Heart left ventricle (tissue), 16 donors: ENCODE measurements at regions of chr11 and their contacts with region 1.

Region 1: DNA sequence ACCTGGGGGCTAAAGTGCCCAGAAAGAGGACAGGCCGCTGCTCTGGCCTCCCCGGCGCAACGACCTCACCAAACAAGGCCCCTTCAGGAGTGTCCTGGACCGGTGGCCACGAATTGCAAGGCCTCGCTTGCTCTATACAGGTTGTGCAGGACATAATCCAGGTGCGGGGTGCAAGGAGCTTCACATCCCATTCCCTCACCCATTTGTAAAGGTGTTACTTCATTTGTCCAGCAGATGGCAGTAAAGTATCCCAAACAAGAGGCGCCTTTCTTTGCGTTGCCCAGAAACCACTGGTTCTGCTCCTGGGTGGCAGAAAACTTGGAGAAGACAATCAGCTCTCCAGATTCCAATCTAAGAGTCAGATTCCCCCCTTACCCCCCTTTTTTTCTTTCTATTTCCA is 35.9 kb upstream of the PRDM11 start:
- DNase-seq: peak in 3 of 5 donors; percentile 24 to 48 (median 45)
- ATAC-seq: peak; percentile 37 to 77 (median 68)
- H3K4me3 ChIP-seq: no peak overlapping the region
- H3K27ac ChIP-seq: no peak overlapping the region
- H3K4me1 ChIP-seq: peaks cover 0 to 3% (median 0%) of the 10 kb centered on the region in 12 donors
- H3K27me3 ChIP-seq: peaks cover 0 to 13% (median 0%) of the 10 kb centered on the region in 9 donors
- CTCF ChIP-seq: peak; percentile 68 to 89 (median 82)
- POLR2A ChIP-seq: no peak

Region 2: DNA sequence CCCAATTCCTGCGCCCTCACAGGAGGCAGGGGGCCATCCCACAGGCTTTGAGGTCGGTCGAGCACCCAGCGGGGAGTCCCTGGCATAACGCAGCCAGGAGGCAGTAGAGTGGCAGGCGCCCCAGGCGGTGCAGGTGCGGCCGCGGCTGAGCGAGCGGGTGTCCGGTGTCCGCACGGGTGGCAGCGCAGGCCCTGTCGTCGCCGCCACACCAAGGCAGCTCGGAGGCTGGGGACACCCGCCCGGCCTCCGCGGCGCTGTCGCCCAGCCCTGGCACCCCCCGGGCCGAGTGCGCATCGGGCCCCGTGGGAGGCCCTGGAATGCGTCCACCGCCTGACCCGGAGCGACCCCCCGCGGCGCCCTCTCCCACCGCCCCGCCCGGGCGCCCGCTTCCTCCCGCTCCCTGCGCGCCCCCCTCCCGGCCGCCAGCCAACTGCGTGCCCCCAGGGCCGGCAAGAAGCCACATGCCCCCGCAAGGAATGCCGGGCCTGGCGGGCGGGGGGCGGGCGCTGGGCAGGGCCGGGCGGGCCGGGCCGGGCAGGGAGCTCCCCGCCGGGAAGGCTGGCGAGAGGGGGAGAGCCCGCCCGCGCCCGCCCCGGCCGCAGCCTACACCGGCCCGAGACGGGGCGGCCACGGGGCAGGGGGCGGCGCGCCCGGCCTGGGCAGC is 69.7 kb after region 1 on chr11:
- intact Hi-C with region 1: loop called in 1 of 10 experiments (anchors 5 kb)
- DNase-seq: peak; percentile 58 to 77 (median 71)
- ATAC-seq: peak; percentile 36 to 83 (median 73)
- H3K4me3 ChIP-seq: peak overlapping the region; percentile 34 to 83 (median 64)
- H3K27ac ChIP-seq: peak overlapping the region; percentile 62 to 95 (median 88)
- H3K4me1 ChIP-seq: peaks cover 0 to 48% (median 24%) of the 10 kb centered on the region in 12 donors
- H3K27me3 ChIP-seq: peaks cover 0 to 12% (median 0%) of the 10 kb centered on the region in 9 donors
- CTCF ChIP-seq: peak in 10 of 12 donors; percentile 21 to 60 (median 46)
- POLR2A ChIP-seq: no peak

Region 3: GRCh38 chr11:45233121-45233803 is 122.7 kb after region 1 on chr11:
- intact Hi-C with region 1: loop called in 6 of 10 experiments (anchors 2 to 10 kb)
- DNase-seq: peak; percentile 51 to 82 (median 67)
- ATAC-seq: peak in 3 of 4 donors; percentile 67 to 76 (median 74)
- H3K4me3 ChIP-seq: no peak overlapping the region
- H3K27ac ChIP-seq: no peak overlapping the region
- H3K4me1 ChIP-seq: peaks cover 0 to 5% (median 0%) of the 10 kb centered on the region in 12 donors
- H3K27me3 ChIP-seq: peaks cover 0 to 3% (median 0%) of the 10 kb centered on the region in 9 donors
- CTCF ChIP-seq: peak; percentile 74 to 88 (median 81)
- POLR2A ChIP-seq: no peak

Region 4: DNA sequence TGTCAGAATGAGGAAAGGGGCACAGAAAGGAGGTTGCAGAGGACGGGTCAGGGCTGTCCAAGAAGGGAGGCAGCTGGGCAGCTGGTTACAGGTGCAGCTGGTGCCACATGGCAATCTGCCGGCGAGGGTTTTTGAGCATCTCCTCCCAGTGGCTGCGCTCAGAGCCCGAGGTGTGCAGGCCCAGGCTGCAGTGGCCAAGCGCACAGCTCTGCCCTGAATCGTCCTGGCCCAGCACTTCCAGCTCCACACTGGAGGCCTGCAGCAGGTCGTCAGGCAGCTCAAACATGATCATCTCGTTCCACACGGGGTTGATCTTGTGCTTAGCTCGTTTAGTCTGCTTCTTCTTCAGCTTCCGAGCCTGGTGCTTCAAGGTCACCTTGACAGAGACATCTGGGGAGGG is 133.4 kb after region 1 on chr11:
- intact Hi-C with region 1: loop called in 2 of 10 experiments (anchors 5 kb)
- DNase-seq: no peak
- ATAC-seq: no peak
- H3K4me3 ChIP-seq: no peak overlapping the region
- H3K27ac ChIP-seq: no peak overlapping the region
- H3K4me1 ChIP-seq: peaks cover 0 to 7% (median 0%) of the 10 kb centered on the region in 12 donors
- H3K27me3 ChIP-seq: no peaks in the 10 kb centered on the region
- CTCF ChIP-seq: no peak
- POLR2A ChIP-seq: no peak

Region 5: GRCh38 chr11:45298718-45299117 is 188.2 kb after region 1 on chr11:
- intact Hi-C with region 1: loop called (anchors 1 to 2 kb)
- DNase-seq: no peak
- ATAC-seq: no peak
- H3K4me3 ChIP-seq: no peak overlapping the region
- H3K27ac ChIP-seq: no peak overlapping the region
- H3K4me1 ChIP-seq: no peaks in the 10 kb centered on the region
- H3K27me3 ChIP-seq: peaks cover 0 to 5% (median 0%) of the 10 kb centered on the region in 9 donors
- CTCF ChIP-seq: no peak
- POLR2A ChIP-seq: no peak